GM10248 (cell line): ENCODE measurements at regions of chr1 and their contacts with region 1.

Region 1: DNA sequence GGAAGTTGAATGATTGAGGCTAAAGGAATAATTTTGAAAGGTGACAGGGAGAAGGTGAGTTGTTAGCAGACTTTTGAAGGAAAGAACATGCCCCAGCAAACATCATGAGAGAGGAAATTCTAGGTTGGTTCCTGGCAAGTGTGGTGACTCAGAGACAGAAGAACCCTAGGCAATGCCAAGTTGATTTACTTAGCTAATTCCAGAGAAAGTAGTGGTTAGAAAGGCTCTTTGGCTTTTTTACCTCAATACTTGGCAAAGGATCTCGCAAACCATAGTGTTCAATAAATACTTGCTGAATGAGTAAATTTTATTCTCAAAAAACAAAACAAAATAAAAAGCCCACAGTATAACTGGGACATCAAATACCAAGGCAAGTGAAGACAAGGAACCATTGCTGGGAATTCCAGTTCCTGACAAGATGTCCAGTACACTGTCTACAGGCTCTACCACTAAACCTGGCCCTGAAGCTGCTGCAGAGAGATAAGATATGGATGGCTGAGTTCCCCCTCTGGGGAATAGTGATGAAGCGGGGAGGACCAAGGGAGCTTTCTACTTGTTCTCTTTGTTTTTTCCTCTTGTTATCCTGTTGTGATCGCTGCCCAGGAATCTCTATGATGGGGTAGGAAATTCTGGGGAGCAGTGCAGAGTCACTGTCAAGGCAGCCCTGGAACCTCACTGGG is 48.2 kb downstream of the IL12RB2 start:
- DNase-seq: no peak
- CTCF ChIP-seq: no peak

Region 2: DNA sequence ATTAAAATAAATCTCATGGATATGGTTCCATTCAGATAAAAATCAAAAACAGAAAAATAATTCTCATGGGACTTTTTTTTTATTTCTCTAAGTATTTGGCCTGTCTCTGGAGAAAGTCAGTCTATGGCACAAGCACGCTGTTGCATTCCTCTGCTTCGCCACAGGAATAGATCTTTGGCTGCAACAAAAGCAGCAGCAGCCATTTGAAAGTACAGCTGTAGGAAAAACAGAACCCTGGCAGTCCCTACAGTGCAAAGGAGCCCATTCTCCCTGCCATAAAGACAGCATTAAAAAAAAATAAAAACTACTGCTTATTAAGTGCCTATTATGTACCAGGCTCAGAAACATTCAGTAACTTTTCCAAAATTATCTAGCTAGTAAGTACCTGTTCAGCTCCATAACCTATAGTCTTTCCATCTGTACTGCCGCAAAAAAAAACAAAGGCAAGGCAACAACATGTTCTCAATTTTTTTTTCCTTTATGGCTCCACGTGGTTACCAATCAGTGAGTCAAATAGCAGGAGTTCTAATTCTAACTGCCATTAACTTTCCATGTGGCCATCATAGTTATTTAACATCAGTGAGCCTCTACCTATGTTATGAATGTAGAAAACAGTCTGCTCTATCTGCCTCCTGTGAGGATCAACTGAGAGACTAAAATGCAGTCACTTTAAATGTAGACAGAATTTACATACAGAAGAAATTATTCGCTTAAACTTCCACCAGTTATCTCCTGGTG is 324.6 kb before region 1 on chr1:
- CTCF ChIA-PET with region 1: no interaction called
- POLR2A ChIA-PET with region 1: no interaction called
- DNase-seq: no peak
- CTCF ChIP-seq: no peak

Region 3: DNA sequence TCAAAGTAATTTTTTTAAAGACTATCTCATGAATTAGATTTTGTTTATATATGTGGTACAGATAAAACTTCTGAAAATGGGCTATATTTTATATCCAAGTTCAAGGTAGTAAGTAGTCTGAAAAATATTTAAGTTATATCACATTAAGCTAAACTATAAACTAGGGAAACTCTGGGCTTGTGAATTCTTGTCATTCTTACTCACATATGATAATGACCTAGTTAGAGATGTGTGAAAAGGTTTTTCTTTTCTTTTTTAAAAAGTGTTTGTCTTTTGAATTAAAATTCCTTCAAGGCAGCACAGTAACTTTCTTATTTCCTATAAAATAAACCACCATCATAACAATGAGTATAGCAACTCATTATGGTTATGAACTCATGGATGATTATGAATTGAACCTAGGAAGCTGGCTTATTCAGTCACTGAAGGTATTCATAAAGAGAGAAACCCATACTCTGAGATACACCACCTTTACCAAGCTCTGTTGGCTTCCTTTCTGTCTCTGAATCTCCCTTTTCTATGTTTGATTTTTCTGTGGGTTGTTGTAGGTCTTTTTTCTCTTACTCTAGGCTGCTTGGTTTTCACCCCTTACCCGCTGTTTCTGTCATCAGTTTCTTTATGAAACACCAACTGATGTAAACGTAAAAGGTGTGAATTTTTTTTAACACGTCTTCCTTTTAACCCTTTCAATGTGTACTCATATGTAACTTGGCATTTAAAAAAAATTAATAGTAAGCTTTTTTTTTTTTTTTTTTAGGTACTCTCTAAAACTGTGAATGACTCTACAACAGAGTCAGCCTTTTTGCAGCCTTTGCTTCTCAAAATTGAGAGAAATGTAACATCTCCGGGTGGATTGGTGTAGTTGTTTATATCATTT is 23.0 kb before region 1 on chr1:
- CTCF ChIA-PET with region 1: interaction called, 11 read pairs
- POLR2A ChIA-PET with region 1: no interaction called
- DNase-seq: peak; percentile 69
- CTCF ChIP-seq: no peak

Region 4: DNA sequence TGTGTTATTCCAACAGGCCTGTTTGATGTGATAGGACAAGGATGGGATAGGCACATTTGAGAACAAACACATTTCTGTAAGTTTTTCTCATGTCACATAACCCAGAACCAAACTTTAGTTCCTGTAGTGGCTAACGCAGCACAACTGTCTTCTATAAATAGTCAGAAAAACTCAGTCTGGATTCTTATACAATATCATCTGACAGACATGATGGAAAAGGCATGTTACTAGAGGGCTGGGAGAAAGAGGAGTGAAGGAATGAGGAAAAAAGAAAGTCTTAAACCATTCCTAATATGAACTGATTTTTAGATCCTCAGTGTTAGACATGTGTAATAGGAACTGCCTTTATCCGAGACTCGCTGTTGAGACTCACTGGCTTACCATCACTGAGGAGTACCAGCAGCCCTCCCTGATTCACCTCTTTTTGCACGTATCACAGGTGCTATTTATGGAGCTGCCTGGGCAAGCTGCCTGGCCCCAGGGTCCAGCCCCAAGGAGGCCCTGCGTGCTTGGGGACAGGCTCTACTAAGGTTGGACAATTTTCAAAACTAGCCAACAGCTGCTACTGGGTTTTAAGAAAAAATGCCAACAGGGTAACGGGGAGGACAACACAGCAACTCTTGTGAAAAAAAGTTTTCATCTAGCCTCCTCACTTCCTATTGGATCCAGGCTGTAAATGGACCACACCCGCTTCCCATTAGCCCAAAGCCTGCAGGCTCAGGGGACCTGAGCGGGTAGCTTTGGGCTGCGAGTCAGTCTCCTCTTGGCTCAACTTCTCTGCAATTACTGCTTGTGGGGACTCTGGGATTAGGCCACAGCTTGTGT is 105.0 kb after region 1 on chr1:
- CTCF ChIA-PET with region 1: no interaction called
- POLR2A ChIA-PET with region 1: no interaction called
- DNase-seq: no peak
- CTCF ChIP-seq: no peak